ENCODE measurements at regions of chr7 and their contacts with region 1.

Region 1: GRCh38 chr7:151759591-151760042 is 117.3 kb downstream of the PRKAG2 start:
- DNase-seq: peak; percentile 83
- H3K4me3 ChIP-seq: no peak overlapping the region
- H3K27ac ChIP-seq: peak overlapping the region in 1 of 4 donors; percentile 91
- H3K4me1 ChIP-seq: peaks cover 0 to 50% (median 49%) of the 10 kb centered on the region in 4 donors
- H3K27me3 ChIP-seq: no peaks in the 10 kb centered on the region
- CTCF ChIP-seq: peak; percentile 58 to 95 (median 84)
- EP300 ChIP-seq: no peak
- POLR2A ChIP-seq: no peak

Region 2: GRCh38 chr7:151315038-151315655 is 444.5 kb before region 1 on chr7:
- intact Hi-C with region 1: loop called (anchors 10 kb)
- DNase-seq: peak; percentile 84
- H3K4me3 ChIP-seq: no peak overlapping the region
- H3K27ac ChIP-seq: no peak overlapping the region
- H3K4me1 ChIP-seq: peaks cover 0 to 14% (median 4%) of the 10 kb centered on the region in 4 donors
- H3K27me3 ChIP-seq: no peaks in the 10 kb centered on the region
- CTCF ChIP-seq: peak; percentile 41 to 87 (median 82)
- EP300 ChIP-seq: no peak
- POLR2A ChIP-seq: no peak

Region 3: GRCh38 chr7:151459726-151460473 is 299.7 kb before region 1 on chr7:
- intact Hi-C with region 1: loop called (anchors 2 kb)
- DNase-seq: peak; percentile 98
- H3K4me3 ChIP-seq: peak overlapping the region in 3 of 4 donors; percentile 13 to 29 (median 27)
- H3K27ac ChIP-seq: peak overlapping the region; percentile 85 to 98 (median 96)
- H3K4me1 ChIP-seq: peaks cover 0 to 34% (median 32%) of the 10 kb centered on the region in 4 donors
- H3K27me3 ChIP-seq: no peaks in the 10 kb centered on the region
- CTCF ChIP-seq: peak in 2 of 4 experiments; percentile 13 to 23
- EP300 ChIP-seq: peak; percentile 70 to 99 (median 92)
- POLR2A ChIP-seq: peak in 1 of 2 donors; percentile 12

Region 4: GRCh38 chr7:151566897-151567320 is 192.7 kb before region 1 on chr7:
- intact Hi-C with region 1: loop called (anchors 5 kb)
- DNase-seq: peak; percentile 70
- H3K4me3 ChIP-seq: no peak overlapping the region
- H3K27ac ChIP-seq: peak overlapping the region; percentile 55 to 80 (median 67)
- H3K4me1 ChIP-seq: peaks cover 0 to 16% (median 13%) of the 10 kb centered on the region in 4 donors
- H3K27me3 ChIP-seq: no peaks in the 10 kb centered on the region
- CTCF ChIP-seq: no peak
- EP300 ChIP-seq: no peak
- POLR2A ChIP-seq: no peak

Region 5: DNA sequence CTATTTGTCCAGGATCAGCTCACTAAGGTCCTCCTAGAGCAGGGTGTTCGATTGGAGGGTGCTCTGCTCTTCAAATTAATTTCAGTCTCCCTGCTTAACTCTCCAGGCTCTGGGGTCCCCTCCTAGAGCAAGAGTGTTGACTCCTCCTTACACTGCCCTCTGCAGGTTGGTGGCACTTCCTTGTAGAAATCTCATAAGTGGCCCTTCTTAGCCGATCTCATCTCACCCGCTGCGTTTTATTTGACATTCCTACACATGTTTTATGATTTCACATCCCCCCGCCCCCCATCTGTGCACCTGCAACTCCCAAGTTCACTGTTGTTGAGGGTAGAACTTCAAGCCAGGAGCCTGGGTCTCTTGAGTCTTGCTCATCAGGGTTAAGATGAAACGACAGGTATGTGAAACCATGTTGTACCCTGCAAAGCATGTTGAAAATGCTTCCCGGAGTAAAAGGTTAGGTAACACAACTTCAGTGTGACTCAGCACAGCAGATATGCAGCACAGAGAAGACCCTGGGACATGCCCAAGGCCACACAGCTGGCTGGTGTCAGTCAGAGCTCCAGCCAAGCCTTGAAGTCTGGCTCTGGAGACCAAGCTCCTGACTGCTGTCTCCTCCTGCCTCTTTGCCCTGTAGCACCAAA is 53.9 kb before region 1 on chr7:
- intact Hi-C with region 1: loop called (anchors 5 kb)
- DNase-seq: no peak
- H3K4me3 ChIP-seq: peak overlapping the region in 2 of 4 donors; percentile 1 to 5
- H3K27ac ChIP-seq: peak overlapping the region in 1 of 4 donors; percentile 32
- H3K4me1 ChIP-seq: peaks cover 0 to 19% (median 12%) of the 10 kb centered on the region in 4 donors
- H3K27me3 ChIP-seq: no peaks in the 10 kb centered on the region
- CTCF ChIP-seq: peak in 3 of 4 experiments; percentile 42 to 49 (median 49)
- EP300 ChIP-seq: no peak
- POLR2A ChIP-seq: no peak

Region 6: GRCh38 chr7:153061910-153062528 is 1302.4 kb after region 1 on chr7:
- intact Hi-C with region 1: no loop called
- DNase-seq: no peak
- H3K4me3 ChIP-seq: no peak overlapping the region
- H3K27ac ChIP-seq: no peak overlapping the region
- H3K4me1 ChIP-seq: no peaks in the 10 kb centered on the region
- H3K27me3 ChIP-seq: peaks cover 0 to 4% (median 0%) of the 10 kb centered on the region in 3 donors
- CTCF ChIP-seq: no peak
- EP300 ChIP-seq: no peak
- POLR2A ChIP-seq: no peak

Measured in sigmoid colon (tissue), 7 donors.